Caco-2 (cell line): ENCODE measurements at regions of chr6 and their contacts with region 1.

Region 1: DNA sequence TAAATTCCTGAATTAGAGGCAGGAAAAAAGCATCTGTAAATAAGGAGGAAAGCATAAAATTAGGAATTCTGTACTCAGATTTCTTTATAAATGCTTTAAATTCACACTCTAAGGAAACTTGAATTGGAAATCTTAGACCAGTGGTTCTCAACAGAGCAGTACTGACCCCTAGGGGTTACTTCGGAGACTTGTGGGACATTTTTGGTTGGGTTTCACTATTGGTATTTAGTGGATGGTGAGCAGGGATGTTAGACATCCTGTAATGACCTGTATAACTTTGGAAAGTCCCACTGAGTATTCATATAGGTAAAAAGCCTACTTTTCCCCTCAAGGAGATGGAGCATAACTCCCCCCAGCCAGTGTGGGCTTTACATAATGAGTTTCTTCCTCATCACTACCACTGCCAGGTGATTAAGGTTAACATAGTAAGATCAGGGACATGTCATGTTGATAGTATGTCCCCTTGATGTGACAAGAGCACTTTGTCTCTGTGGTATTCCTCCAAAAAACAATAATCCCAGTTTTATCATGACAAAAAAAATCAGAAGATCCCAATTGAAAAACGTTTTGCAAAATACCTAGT is 31.0 kb downstream of the GLO1 start:
- DNase-seq: peak in 1 of 2 experiments; percentile 59
- H3K4me3 ChIP-seq: no peak overlapping the region
- H3K4me3 Mint-ChIP-seq: no peak overlapping the region
- H3K27ac Mint-ChIP-seq: no peak overlapping the region
- H3K4me1 ChIP-seq: no peaks in the 10 kb centered on the region
- H3K4me1 Mint-ChIP-seq: no peaks in the 10 kb centered on the region
- H3K27me3 ChIP-seq: no peaks in the 10 kb centered on the region
- H3K27me3 Mint-ChIP-seq: no peaks in the 10 kb centered on the region
- CTCF ChIP-seq: peak; percentile 70 to 73

Region 2: GRCh38 chr6:38570750-38571149 is 101.2 kb before region 1 on chr6:
- CTCF ChIA-PET with region 1: no interaction called
- POLR2A ChIA-PET with region 1: no interaction called
- intact Hi-C with region 1: loop called (anchors 2 kb)
- DNase-seq: no peak
- H3K4me3 ChIP-seq: no peak overlapping the region
- H3K4me3 Mint-ChIP-seq: no peak overlapping the region
- H3K27ac Mint-ChIP-seq: peak overlapping the region; percentile 49
- H3K4me1 ChIP-seq: peaks cover 13% of the 10 kb centered on the region
- H3K4me1 Mint-ChIP-seq: peaks cover 32% of the 10 kb centered on the region
- H3K27me3 ChIP-seq: no peaks in the 10 kb centered on the region
- H3K27me3 Mint-ChIP-seq: no peaks in the 10 kb centered on the region
- CTCF ChIP-seq: peak in 1 of 2 experiments; percentile 47

Region 3: DNA sequence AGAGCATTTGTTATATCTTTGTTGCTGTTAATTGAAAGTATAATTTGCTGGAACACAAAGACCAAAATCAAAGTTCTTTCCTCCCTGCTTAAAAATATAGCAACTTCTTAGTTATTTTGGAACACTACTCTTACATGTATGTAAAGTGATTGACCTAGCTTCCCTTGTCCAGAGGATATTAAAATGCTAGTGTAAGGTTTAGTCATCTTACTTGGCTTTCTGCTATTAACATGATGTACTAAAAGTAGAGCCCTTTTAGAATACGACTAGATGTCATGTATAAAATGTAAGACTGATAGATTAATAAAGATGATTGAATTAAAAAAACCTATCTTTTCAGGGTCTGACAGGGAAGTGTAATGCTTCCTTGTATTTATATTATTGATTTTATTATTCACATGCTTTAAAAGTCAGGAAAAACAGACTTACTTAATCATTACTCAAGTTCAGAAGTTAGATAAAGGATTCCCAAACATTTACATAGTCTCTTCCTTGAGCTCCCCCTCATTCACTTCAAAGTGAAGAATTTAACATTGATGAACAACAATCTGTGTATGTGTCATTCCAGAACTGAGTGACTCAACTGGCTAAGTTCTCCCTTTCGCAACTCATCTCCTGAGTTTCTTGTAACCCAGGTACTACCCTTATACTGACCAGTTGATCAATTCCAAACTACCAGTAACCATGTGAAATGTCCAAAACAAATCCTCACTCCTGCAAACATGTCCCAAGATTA is 83.2 kb before region 1 on chr6:
- CTCF ChIA-PET with region 1: interaction called, 3 read pairs
- POLR2A ChIA-PET with region 1: no interaction called
- intact Hi-C with region 1: loop called (anchors 5 kb)
- DNase-seq: peak in 1 of 2 experiments; percentile 41
- H3K4me3 ChIP-seq: no peak overlapping the region
- H3K4me3 Mint-ChIP-seq: no peak overlapping the region
- H3K27ac Mint-ChIP-seq: no peak overlapping the region
- H3K4me1 ChIP-seq: peaks cover 18% of the 10 kb centered on the region
- H3K4me1 Mint-ChIP-seq: no peaks in the 10 kb centered on the region
- H3K27me3 ChIP-seq: no peaks in the 10 kb centered on the region
- H3K27me3 Mint-ChIP-seq: no peaks in the 10 kb centered on the region
- CTCF ChIP-seq: no peak

Region 4: DNA sequence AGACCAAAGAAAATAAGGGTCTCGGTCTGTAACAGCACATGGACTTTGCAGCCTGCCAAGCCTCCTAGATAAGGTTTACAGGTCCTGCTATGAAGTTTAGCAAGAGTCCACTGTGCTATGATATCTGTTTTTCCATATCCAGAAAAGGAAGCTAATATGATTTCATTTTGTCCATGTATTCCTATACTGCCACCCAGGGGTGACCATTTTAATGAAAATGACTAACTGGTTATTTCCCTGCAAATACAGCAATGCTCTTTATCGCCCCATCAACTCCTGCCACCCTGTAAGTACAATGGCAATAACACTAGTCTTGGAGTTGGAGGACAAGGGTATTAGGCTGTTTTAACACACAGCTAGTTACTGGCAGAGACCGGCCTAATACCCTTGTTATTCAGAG is 261.5 kb after region 1 on chr6:
- CTCF ChIA-PET with region 1: no interaction called
- POLR2A ChIA-PET with region 1: no interaction called
- intact Hi-C with region 1: loop called (anchors 10 kb)
- DNase-seq: peak in 1 of 2 experiments; percentile 47
- H3K4me3 ChIP-seq: no peak overlapping the region
- H3K4me3 Mint-ChIP-seq: no peak overlapping the region
- H3K27ac Mint-ChIP-seq: no peak overlapping the region
- H3K4me1 ChIP-seq: no peaks in the 10 kb centered on the region
- H3K4me1 Mint-ChIP-seq: no peaks in the 10 kb centered on the region
- H3K27me3 ChIP-seq: no peaks in the 10 kb centered on the region
- H3K27me3 Mint-ChIP-seq: peaks cover 15% of the 10 kb centered on the region
- CTCF ChIP-seq: no peak